Heart right ventricle (tissue), 16 donors: ENCODE measurements at regions of chr1 and their contacts with region 1.

Region 1: GRCh38 chr1:160098852-160099561 is 588 bp upstream of the IGSF8 start:
- DNase-seq: peak; percentile 98 to 99
- ATAC-seq: peak; percentile 89 to 94 (median 92)
- H3K4me3 ChIP-seq: peak overlapping the region in 9 of 10 donors; percentile 70 to 95 (median 81)
- H3K27ac ChIP-seq: peak overlapping the region; percentile 20 to 97 (median 92)
- H3K4me1 ChIP-seq: peaks cover 16 to 63% (median 36%) of the 10 kb centered on the region in 9 donors
- H3K27me3 ChIP-seq: no peaks in the 10 kb centered on the region
- CTCF ChIP-seq: no peak

Region 2: GRCh38 chr1:159979257-159979656 is 119.8 kb before region 1 on chr1:
- intact Hi-C with region 1: no loop called
- DNase-seq: no peak
- ATAC-seq: no peak
- H3K4me3 ChIP-seq: no peak overlapping the region
- H3K27ac ChIP-seq: no peak overlapping the region
- H3K4me1 ChIP-seq: no peaks in the 10 kb centered on the region
- H3K27me3 ChIP-seq: peaks cover 0 to 36% (median 0%) of the 10 kb centered on the region in 7 donors
- CTCF ChIP-seq: no peak

Region 3: DNA sequence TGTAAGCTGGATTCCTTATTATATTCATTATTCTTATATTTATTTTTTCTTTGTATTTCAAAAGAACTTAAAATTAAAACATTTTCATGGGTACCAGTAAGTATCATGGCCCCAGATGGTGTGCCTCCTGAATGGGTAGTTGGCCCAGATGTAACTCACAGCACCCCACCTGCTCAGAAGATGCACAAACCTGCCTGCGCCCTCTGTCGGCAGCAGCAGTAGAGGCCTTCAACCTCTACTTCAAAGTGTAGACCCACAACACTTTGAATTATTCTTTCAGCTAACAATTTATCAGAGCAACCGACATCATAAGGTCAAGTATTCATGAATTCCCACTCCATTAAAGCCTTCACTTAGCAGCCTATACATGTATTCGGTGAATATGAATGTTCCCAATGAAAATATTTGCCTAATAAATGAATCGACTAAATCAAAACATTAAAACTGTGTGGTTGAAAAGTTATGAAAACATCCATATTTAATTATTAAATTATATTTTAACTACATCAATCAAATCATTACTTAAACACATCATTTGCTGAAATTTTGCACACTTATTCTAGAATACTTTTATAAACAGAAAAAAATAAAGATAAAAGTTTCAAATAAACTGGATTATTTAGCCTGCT is 92.6 kb before region 1 on chr1:
- intact Hi-C with region 1: no loop called
- DNase-seq: peak; percentile 35 to 72
- ATAC-seq: peak in 4 of 8 donors; percentile 47 to 78 (median 54)
- H3K4me3 ChIP-seq: no peak overlapping the region
- H3K27ac ChIP-seq: no peak overlapping the region
- H3K4me1 ChIP-seq: no peaks in the 10 kb centered on the region
- H3K27me3 ChIP-seq: no peaks in the 10 kb centered on the region
- CTCF ChIP-seq: peak; percentile 36 to 91 (median 77)

Region 4: GRCh38 chr1:160149716-160150115 is 50.7 kb after region 1 on chr1:
- intact Hi-C with region 1: no loop called
- DNase-seq: no peak
- ATAC-seq: no peak
- H3K4me3 ChIP-seq: no peak overlapping the region
- H3K27ac ChIP-seq: no peak overlapping the region
- H3K4me1 ChIP-seq: peaks cover 0 to 20% (median 0%) of the 10 kb centered on the region in 9 donors
- H3K27me3 ChIP-seq: no peaks in the 10 kb centered on the region
- CTCF ChIP-seq: no peak

Region 5: DNA sequence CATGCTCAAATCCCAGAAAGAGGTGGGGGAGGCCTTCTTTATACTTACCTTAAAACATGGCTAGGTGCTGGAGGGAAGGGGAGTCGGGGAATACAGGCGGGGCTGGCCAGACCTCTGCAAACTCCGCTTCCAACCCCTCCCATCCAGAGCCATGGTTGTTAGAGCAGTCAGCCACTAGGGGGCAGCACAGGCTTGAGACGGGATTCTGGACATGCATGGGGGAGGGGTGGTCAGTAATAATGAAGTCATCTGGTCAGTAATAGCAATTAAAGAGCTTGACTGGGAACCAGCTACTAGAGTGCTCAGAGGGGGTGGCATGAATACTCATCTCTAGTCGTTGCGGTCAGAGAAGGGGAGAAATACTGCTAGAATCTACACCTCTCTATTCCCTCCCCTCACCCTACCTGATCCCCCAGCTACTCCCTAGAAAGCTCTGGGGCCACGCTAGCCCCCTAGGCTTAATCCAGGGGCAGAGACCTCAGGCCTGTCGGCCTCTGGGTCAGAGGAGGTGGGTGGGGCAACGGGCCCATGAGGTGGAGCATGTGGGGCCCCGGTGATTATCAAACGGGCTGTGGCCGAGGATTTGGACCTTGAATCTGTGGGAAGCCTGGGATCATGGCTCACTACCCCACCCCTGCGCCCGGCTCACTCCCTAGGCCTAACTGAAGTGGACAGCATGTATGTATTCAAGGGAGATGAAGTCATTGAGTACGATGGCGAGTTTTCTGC is 94.2 kb after region 1 on chr1:
- intact Hi-C with region 1: loop called in 6 of 10 experiments (anchors 2 to 10 kb)
- DNase-seq: peak; percentile 86 to 92
- ATAC-seq: peak; percentile 83 to 91 (median 88)
- H3K4me3 ChIP-seq: no peak overlapping the region
- H3K27ac ChIP-seq: peak overlapping the region in 7 of 10 donors; percentile 59 to 87 (median 79)
- H3K4me1 ChIP-seq: peaks cover 9 to 58% (median 18%) of the 10 kb centered on the region in 9 donors
- H3K27me3 ChIP-seq: no peaks in the 10 kb centered on the region
- CTCF ChIP-seq: peak; percentile 94 to 98 (median 96)

Region 6: DNA sequence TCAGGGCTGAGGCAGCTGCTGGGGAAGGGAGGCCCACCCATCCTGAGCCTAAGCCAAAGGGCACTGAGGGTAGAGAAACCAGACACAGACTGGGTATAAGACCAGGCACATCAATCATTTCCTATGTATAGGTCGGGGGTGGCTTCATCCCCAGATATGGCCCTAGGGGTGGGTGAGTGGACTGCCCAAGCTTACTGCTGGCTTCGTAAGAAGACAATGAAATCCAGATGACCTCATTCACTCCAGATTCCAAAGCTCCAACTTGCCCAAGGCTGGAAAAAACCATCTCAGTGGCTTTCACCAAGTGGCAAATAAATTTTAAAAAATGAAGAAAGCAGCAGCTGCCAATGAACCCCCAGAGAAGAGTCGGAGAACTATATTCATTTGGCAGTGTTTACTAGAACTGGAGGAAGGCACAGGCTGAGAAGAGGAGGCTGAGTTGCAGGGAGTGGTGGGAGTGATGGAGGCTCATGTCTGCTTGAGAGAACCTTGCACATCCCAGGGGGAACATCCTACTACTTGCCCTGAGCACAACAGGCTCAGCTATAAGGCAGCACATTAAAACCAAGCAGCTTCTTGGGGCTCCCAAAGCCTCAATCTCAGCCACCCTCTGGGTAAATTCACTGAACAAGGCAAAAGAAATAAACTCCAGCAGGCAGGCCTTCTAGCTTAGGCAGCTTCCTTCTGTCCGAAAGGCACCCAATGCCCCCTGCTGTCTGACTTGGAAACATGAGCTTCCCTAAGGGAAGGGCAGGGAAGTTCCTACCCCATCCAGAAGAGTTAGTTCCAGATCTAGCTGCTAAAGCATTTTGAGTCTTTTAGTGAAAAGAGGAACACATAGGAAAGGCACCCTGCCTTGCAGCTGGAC is 120.3 kb after region 1 on chr1:
- intact Hi-C with region 1: loop called in 3 of 10 experiments (anchors 1 to 10 kb)
- DNase-seq: peak in 1 of 2 donors; percentile 69
- ATAC-seq: peak; percentile 71 to 90 (median 87)
- H3K4me3 ChIP-seq: no peak overlapping the region
- H3K27ac ChIP-seq: peak overlapping the region in 9 of 10 donors; percentile 40 to 80 (median 66)
- H3K4me1 ChIP-seq: peaks cover 4 to 54% (median 47%) of the 10 kb centered on the region in 9 donors
- H3K27me3 ChIP-seq: no peaks in the 10 kb centered on the region
- CTCF ChIP-seq: peak; percentile 31 to 82 (median 73)

Region 7: GRCh38 chr1:160291248-160292220 is 192.5 kb after region 1 on chr1:
- intact Hi-C with region 1: loop called in 5 of 10 experiments (anchors 1 to 10 kb)
- DNase-seq: peak; percentile 24 to 65
- ATAC-seq: peak; percentile 57 to 90 (median 87)
- H3K4me3 ChIP-seq: no peak overlapping the region
- H3K27ac ChIP-seq: peak overlapping the region in 1 of 10 donors; percentile 2
- H3K4me1 ChIP-seq: peaks cover 0 to 5% (median 0%) of the 10 kb centered on the region in 9 donors
- H3K27me3 ChIP-seq: no peaks in the 10 kb centered on the region
- CTCF ChIP-seq: peak; percentile 69 to 87 (median 81)